Activated T-helper 1 cell treated with anti-CD3 and anti-CD28 coated beads, Interleukin-12 subunit alpha, Interleukin-12 subunit beta, Interleukin-2, Interleukin-4 antibody, amounts not matched to agents 30 ng/mL and 10 ng/mL and 1 ng/mL, durations not matched to agents 14 hours and 24 hours and 36 hours (primary cell): ENCODE measurements at regions of chr14 and their contacts with region 1.

Region 1: DNA sequence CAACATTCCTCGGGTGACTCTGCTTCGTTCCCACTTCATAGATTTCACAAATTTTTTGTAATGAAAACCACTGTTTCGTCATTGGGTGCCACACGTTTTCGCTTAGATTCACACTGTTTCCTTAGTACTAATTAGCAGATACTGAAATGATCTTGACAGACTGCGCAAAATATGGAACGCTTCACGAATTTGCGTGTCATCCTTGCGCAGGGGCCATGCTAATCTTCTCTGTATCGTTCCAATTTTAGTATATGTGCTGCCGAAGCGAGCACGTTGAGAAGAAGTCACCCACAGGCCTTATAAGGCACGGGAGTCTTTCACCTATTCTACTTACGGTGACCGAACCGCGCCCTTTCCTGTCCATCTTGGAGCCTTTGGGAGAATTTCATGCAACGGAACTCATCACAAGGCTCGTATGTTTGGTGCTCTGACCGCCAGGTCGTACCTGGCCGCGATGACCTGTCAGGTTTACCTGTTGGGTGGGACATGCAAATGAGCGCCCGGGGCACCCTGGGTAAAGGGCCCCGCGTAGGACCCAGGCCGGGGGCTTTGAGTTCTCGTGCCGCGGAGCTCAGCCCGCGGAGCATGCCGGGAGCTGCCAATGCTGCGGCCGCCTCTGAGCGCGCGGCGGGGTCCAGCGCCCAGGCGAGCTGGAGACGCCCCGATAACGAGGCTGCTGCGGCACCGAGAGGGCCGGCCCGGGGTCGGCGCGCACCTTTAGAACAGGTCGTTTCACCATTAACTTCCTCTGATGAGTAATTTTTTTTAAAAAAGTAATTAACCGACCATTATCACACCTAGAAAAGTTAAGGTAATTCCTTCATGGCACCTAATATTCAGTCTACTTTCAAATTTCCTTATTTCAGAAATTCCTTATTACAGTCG is at the start of gene RNU6-8:
- DNase-seq: peak; percentile 78
- H3K4me3 Mint-ChIP-seq: peak within 1 kb of the TSS; percentile 87
- H3K27ac Mint-ChIP-seq: peak within 1 kb of the TSS; percentile 91
- H3K4me1 Mint-ChIP-seq: peaks cover 49% of the 10 kb centered on the region
- H3K27me3 Mint-ChIP-seq: peaks cover 2% of the 10 kb centered on the region
- total RNA-seq, gene RNU6-8: not detected in 2 replicates

Region 2: DNA sequence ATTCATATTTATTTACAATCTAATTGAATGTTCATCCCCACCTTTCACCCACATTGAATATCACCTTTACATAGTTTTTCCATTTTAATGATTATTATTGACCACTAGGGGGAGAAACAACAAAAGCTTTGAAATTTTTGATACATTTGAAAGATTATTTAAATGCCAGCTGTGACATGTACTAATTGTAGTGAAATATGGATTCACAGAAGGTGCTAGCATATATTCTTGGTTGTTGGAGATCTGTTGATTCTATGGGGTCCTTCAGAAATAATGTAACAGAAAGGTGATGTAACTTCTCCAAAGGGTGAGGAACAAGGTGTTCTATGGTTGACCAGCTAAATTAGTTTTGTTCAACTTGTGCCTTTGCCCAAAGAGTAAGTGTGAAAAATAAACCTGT is 693.0 kb before region 1 on chr14:
- intact Hi-C with region 1: loop called (anchors 2 kb)
- DNase-seq: no peak
- H3K4me3 Mint-ChIP-seq: no peak overlapping the region
- H3K27ac Mint-ChIP-seq: no peak overlapping the region
- H3K4me1 Mint-ChIP-seq: no peaks in the 10 kb centered on the region
- H3K27me3 Mint-ChIP-seq: peaks cover 4% of the 10 kb centered on the region

Region 3: GRCh38 chr14:31926123-31926522 is 277.1 kb before region 1 on chr14:
- intact Hi-C with region 1: loop called (anchors 2 kb)
- DNase-seq: no peak
- H3K4me3 Mint-ChIP-seq: no peak overlapping the region
- H3K27ac Mint-ChIP-seq: no peak overlapping the region
- H3K4me1 Mint-ChIP-seq: peaks cover 10% of the 10 kb centered on the region
- H3K27me3 Mint-ChIP-seq: peaks cover 2% of the 10 kb centered on the region

Region 4: GRCh38 chr14:31937721-31938346 is 265.4 kb before region 1 on chr14:
- intact Hi-C with region 1: loop called (anchors 1 kb)
- DNase-seq: peak; percentile 64
- H3K4me3 Mint-ChIP-seq: no peak overlapping the region
- H3K27ac Mint-ChIP-seq: peak overlapping the region; percentile 7
- H3K4me1 Mint-ChIP-seq: peaks cover 10% of the 10 kb centered on the region
- H3K27me3 Mint-ChIP-seq: peaks cover 3% of the 10 kb centered on the region

Region 5: GRCh38 chr14:32252030-32252670 is 48.9 kb after region 1 on chr14:
- intact Hi-C with region 1: loop called (anchors 1 kb)
- DNase-seq: peak; percentile 35
- H3K4me3 Mint-ChIP-seq: no peak overlapping the region
- H3K27ac Mint-ChIP-seq: no peak overlapping the region
- H3K4me1 Mint-ChIP-seq: no peaks in the 10 kb centered on the region
- H3K27me3 Mint-ChIP-seq: no peaks in the 10 kb centered on the region

Region 6: GRCh38 chr14:32939254-32940065 is 736.2 kb after region 1 on chr14:
- intact Hi-C with region 1: loop called (anchors 5 kb)
- DNase-seq: no peak
- H3K4me3 Mint-ChIP-seq: peak overlapping the region; percentile 79
- H3K27ac Mint-ChIP-seq: peak overlapping the region; percentile 52
- H3K4me1 Mint-ChIP-seq: peaks cover 11% of the 10 kb centered on the region
- H3K27me3 Mint-ChIP-seq: peaks cover 65% of the 10 kb centered on the region

Region 7: DNA sequence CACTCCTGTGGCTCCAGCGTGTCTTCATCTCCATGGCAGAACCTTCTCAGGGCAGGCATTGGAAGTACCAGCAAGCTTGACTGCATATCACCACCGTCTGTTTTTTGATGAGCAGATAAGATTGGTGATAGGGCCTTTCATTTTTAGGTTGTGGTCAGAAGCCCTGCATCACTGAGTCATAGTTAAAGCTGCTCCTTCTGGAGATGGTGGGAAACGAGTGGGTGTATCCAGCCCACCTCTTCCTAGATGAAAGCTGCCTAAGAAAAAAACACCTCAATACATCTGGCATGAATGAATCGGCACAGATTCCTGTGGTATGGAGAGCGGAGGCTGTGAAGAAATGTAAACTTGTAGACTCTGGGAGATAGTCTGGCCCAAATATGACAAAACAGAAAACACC is 1996.3 kb after region 1 on chr14:
- intact Hi-C with region 1: loop called (anchors 10 kb)
- DNase-seq: no peak
- H3K4me3 Mint-ChIP-seq: peak overlapping the region; percentile 56
- H3K27ac Mint-ChIP-seq: peak overlapping the region; percentile 63
- H3K4me1 Mint-ChIP-seq: peaks cover 56% of the 10 kb centered on the region
- H3K27me3 Mint-ChIP-seq: no peaks in the 10 kb centered on the region